Heart left ventricle (tissue), 16 donors: ENCODE measurements at regions of chr15 and their contacts with region 1.

Region 1: GRCh38 chr15:90735923-90736322 is 18.8 kb downstream of the BLM start:
- DNase-seq: no peak
- ATAC-seq: no peak
- H3K4me3 ChIP-seq: no peak overlapping the region
- H3K27ac ChIP-seq: no peak overlapping the region
- H3K4me1 ChIP-seq: peaks cover 0 to 20% (median 0%) of the 10 kb centered on the region in 12 donors
- H3K27me3 ChIP-seq: no peaks in the 10 kb centered on the region
- CTCF ChIP-seq: no peak
- POLR2A ChIP-seq: no peak

Region 2: GRCh38 chr15:90660195-90660998 is 75.5 kb before region 1 on chr15:
- intact Hi-C with region 1: no loop called
- DNase-seq: peak; percentile 71 to 87 (median 81)
- ATAC-seq: peak; percentile 57 to 89 (median 88)
- H3K4me3 ChIP-seq: peak overlapping the region in 7 of 12 donors; percentile 12 to 34 (median 20)
- H3K27ac ChIP-seq: peak overlapping the region in 11 of 12 donors; percentile 15 to 88 (median 60)
- H3K4me1 ChIP-seq: peaks cover 0 to 65% (median 14%) of the 10 kb centered on the region in 12 donors
- H3K27me3 ChIP-seq: peaks cover 0 to 4% (median 0%) of the 10 kb centered on the region in 9 donors
- CTCF ChIP-seq: no peak
- POLR2A ChIP-seq: peak in 1 of 2 donors; percentile 30

Region 3: GRCh38 chr15:90829942-90830440 is 94.1 kb after region 1 on chr15:
- intact Hi-C with region 1: loop called in 1 of 10 experiments (anchors 10 kb)
- DNase-seq: peak in 2 of 5 donors; percentile 38 to 50
- ATAC-seq: peak; percentile 52 to 83 (median 68)
- H3K4me3 ChIP-seq: peak overlapping the region in 1 of 12 donors; percentile 26
- H3K27ac ChIP-seq: peak overlapping the region in 2 of 12 donors; percentile 18 to 92
- H3K4me1 ChIP-seq: peaks cover 0 to 25% (median 0%) of the 10 kb centered on the region in 12 donors
- H3K27me3 ChIP-seq: no peaks in the 10 kb centered on the region
- CTCF ChIP-seq: no peak
- POLR2A ChIP-seq: no peak